ENCODE measurements at regions of chr17 and their contacts with region 1.

Region 1: GRCh38 chr17:22278302-22279275 is 586.3 kb downstream of the KCNJ18 start:
- DNase-seq: no peak
- H3K4me3 ChIP-seq: no peak overlapping the region
- H3K27ac ChIP-seq: no peak overlapping the region
- H3K4me1 ChIP-seq: no peaks in the 10 kb centered on the region
- H3K27me3 ChIP-seq: peaks cover 39% of the 10 kb centered on the region
- CTCF ChIP-seq: no peak

Region 2: GRCh38 chr17:21705021-21705601 is 573.5 kb before region 1 on chr17:
- CTCF ChIA-PET with region 1: no interaction called
- POLR2A ChIA-PET with region 1: no interaction called
- intact Hi-C with region 1: no loop called
- DNase-seq: no peak
- H3K4me3 ChIP-seq: no peak overlapping the region
- H3K27ac ChIP-seq: no peak overlapping the region
- H3K4me1 ChIP-seq: peaks cover 6% of the 10 kb centered on the region
- H3K27me3 ChIP-seq: no peaks in the 10 kb centered on the region
- CTCF ChIP-seq: no peak

Region 3: DNA sequence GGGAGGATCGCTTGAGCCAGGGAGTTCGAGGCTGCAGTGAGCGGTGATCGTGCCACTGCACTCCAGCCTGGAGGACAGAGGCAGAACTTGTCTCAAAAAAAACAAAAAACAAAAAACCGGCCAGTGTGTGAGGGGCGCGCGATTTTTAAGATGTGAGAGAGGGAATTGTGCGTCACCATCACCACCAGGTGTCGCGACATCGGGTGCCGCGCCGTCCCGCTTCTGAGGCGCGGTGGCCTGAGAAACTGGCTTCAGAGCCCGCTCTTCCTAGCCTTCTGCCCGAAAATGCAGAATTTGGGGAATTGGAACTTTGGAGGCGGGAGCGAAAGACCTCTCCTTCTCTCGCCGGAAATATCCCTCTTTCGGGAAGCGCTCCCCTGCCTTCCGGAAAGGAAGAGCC is 61.5 kb before region 1 on chr17:
- CTCF ChIA-PET with region 1: no interaction called
- POLR2A ChIA-PET with region 1: no interaction called
- intact Hi-C with region 1: no loop called
- DNase-seq: no peak
- H3K4me3 ChIP-seq: no peak overlapping the region
- H3K27ac ChIP-seq: no peak overlapping the region
- H3K4me1 ChIP-seq: no peaks in the 10 kb centered on the region
- H3K27me3 ChIP-seq: peaks cover 11% of the 10 kb centered on the region; the same call in 1 of the 2 replicates
- CTCF ChIP-seq: no peak

Region 4: GRCh38 chr17:22266231-22266630 is 12.4 kb before region 1 on chr17:
- CTCF ChIA-PET with region 1: no interaction called
- POLR2A ChIA-PET with region 1: interaction called, 12 read pairs
- intact Hi-C with region 1: no loop called
- DNase-seq: peak in 1 of 2 experiments; percentile 22
- H3K4me3 ChIP-seq: no peak overlapping the region
- H3K27ac ChIP-seq: no peak overlapping the region
- H3K4me1 ChIP-seq: no peaks in the 10 kb centered on the region
- H3K27me3 ChIP-seq: peaks cover 34% of the 10 kb centered on the region
- CTCF ChIP-seq: no peak

Measured in PC-9 (cell line).